ENCODE measurements at regions of chr19 and their contacts with region 1.

Region 1: DNA sequence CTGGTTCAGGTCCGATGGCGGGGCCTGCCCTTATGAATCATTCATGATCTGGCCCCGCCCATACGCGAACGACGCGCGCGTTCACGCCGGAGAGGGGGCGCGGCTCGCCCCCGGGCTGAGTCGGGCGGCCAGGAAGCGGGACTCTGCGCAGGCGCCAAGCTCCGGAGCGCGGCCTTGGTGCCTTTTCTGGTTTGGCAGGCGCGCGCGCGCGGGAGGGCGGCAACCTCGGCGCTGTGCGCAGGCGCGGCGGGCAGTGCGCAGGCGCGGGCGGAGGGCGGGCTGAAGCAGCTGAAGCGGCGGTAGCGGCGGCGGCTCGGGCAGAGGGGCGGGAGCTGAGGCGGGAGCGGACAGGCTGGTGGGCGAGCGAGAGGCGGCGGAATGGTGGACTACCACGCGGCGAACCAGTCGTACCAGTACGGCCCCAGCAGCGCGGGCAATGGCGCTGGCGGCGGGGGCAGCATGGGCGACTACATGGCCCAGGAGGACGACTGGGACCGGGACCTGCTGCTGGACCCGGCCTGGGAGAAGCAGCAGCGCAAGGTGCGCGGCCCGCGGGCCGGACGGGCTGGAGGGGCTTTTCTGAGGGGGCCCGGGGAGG is at the start of gene ACTN4:
- DNase-seq: peak; percentile 95 to 99 (median 98)
- H3K4me3 ChIP-seq: peak within 1 kb of the TSS; percentile 57 to 96 (median 89)
- H3K27ac ChIP-seq: peak within 1 kb of the TSS; percentile 15 to 97 (median 85)
- H3K27me3 ChIP-seq: no peaks in the 10 kb centered on the region
- CTCF ChIP-seq: peak in 26 of 56 donors; percentile 5 to 55 (median 24)
- total RNA-seq, gene ACTN4: 271 to 539 (median 377) TPM

Region 2: DNA sequence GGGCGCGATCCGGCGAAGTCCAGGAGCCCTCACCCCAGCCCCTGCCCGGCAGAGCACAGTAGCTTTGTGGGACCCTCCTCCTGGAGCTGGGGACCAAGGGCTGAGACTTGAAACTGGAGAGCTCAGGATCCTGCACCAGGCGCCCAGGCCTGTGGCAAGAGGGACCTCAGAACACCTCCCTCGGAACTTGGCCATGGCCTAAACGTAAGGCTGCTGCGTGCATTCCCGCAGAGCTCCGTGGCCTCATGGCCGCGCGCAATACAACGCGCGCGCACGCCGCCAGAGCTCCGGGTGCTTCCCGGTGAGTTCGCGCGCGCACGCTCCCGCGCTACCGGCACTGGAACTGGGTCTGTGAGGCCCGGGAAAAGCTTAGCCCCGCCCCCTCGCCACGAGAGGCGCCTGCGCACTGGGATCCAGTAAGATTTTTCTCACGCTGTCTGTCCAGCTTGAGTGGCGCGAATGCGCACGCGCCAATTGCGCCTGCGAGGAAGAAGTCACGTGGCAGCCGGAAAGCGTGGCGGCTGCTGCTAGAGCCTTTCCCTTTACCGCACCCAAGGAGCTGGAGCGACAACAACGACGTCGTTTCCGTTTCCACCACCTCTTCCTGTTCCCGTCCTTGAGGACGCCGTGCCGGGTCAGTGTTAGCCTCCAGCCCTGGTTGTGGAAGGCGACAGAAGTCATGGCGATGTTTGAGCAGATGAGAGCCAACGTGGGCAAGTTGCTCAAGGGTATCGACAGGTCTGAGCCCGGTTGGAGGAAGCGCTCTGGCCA is 28.7 kb before region 1 on chr19 and contains the start of gene EIF3K:
- intact Hi-C with region 1: loop called in 1 of 2 experiments (anchors 1 kb)
- DNase-seq: peak; percentile 96 to 99 (median 99)
- H3K4me3 ChIP-seq: peak within 1 kb of the TSS; percentile 61 to 100 (median 95)
- H3K27ac ChIP-seq: peak within 1 kb of the TSS; percentile 10 to 95 (median 87)
- H3K27me3 ChIP-seq: no peaks in the 10 kb centered on the region
- CTCF ChIP-seq: peak in 38 of 56 donors; percentile 7 to 58 (median 34)
- total RNA-seq, gene EIF3K: 165 to 292 (median 241) TPM

Region 3: GRCh38 chr19:38718747-38719543 is 71.5 kb after region 1 on chr19:
- intact Hi-C with region 1: loop called (anchors 2 to 5 kb)
- DNase-seq: peak; percentile 46 to 85 (median 77)
- H3K4me3 ChIP-seq: peak overlapping the region in 1 of 59 donors; percentile 12
- H3K27ac ChIP-seq: peak overlapping the region; percentile 89 to 100 (median 97)
- H3K27me3 ChIP-seq: no peaks in the 10 kb centered on the region
- CTCF ChIP-seq: peak in 50 of 56 donors; percentile 8 to 59 (median 41)

Region 4: GRCh38 chr19:38849860-38850435 is 202.5 kb after region 1 on chr19 and contains the start of gene HNRNPL:
- intact Hi-C with region 1: loop called (anchors 2 to 5 kb)
- DNase-seq: peak in 8 of 10 donors; percentile 98 to 100 (median 100)
- H3K4me3 ChIP-seq: peak within 1 kb of the TSS; percentile 65 to 100 (median 92)
- H3K27ac ChIP-seq: peak within 1 kb of the TSS; percentile 97 to 100 (median 100)
- H3K27me3 ChIP-seq: no peaks in the 10 kb centered on the region
- CTCF ChIP-seq: peak in 54 of 56 donors; percentile 27 to 73 (median 50)
- total RNA-seq, gene HNRNPL: 179 to 311 (median 224) TPM

Measured in dorsolateral prefrontal cortex (tissue), 120 donors.